Transverse colon (tissue), 4 donors: ENCODE measurements at regions of chr4 and their contacts with region 1.

Region 1: GRCh38 chr4:7872264-7872771 is 67.3 kb downstream of the AFAP1 start:
- DNase-seq: no peak
- H3K4me3 ChIP-seq: no peak overlapping the region
- H3K27ac ChIP-seq: peak overlapping the region; percentile 41 to 67 (median 62)
- H3K4me1 ChIP-seq: peaks cover 0 to 28% (median 4%) of the 10 kb centered on the region in 4 donors
- H3K27me3 ChIP-seq: no peaks in the 10 kb centered on the region
- CTCF ChIP-seq: no peak
- EP300 ChIP-seq: no peak
- POLR2A ChIP-seq: no peak

Region 2: DNA sequence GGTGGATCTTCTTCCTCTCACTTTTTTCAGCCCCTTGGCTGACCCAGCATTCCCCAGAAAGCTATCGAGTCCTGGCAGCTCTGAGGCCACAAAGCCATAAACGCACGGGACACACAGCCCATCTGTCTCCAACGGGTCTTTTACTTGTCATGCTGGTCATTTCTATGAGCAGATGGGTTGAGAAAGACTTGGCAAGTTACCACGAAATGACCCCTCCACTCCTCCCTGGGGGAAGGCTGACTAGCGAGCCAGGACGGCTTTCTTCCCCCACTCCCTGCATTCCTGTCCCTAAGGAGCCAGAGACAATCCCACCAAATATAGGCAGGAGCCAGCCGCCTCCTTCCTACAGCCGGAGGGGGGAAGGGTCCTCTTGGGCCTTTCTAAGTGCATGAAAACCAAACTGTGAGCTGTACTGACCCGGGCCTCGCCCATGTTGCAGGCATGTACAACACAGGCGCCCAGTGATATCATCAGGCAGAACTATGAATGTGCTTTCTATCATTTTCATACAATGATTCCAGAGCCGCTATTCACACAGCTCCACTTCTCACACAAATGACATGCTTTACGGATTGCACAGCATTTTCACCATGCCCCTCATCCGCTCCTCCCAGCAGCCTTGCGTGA is 38.7 kb after region 1 on chr4:
- in situ Hi-C with region 1: no loop called
- intact Hi-C with region 1: loop called (anchors 1 kb)
- DNase-seq: no peak
- H3K4me3 ChIP-seq: no peak overlapping the region
- H3K27ac ChIP-seq: peak overlapping the region; percentile 77 to 88 (median 83)
- H3K4me1 ChIP-seq: peaks cover 4 to 54% (median 10%) of the 10 kb centered on the region in 4 donors
- H3K27me3 ChIP-seq: no peaks in the 10 kb centered on the region
- CTCF ChIP-seq: no peak
- EP300 ChIP-seq: no peak
- POLR2A ChIP-seq: no peak